HEK293T (cell line): ENCODE measurements at regions of chr5 and their contacts with region 1.

Region 1: DNA sequence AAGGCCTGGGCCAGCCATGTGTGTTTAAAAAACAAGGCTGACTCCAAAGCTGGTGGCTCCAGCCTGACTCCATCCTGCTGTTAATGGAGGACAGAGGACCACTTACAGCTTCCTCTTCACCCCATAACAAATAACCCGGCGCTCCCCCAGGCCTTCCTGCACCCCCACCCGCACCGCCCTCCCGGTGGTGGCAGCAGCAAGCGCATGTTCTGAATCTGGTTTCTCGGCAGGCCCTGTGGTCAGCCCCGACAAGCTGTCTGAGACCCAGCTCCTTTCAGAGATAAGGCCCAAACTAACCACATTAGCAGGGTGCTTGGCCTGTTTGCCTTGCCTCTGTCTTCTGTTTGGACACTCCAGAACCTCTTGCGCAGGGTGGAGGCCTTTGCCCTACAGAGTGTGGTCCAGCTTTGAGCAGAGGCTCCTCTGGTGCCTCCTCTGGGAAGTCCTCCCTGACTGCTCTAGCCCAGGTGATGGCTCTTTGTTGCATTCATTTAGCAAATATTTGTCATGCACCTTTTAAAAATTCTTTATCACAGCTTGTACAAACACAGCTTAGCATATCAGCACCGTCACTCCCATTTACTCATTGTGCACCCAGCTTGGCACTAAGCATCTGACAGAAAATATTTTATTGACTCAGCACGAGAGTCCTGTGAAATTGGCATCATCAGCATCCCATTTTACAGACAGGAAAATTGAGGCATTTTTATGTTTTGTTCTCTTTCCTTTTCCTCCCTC is 78.4 kb downstream of the NDFIP1 start:
- DNase-seq: no peak

Region 2: DNA sequence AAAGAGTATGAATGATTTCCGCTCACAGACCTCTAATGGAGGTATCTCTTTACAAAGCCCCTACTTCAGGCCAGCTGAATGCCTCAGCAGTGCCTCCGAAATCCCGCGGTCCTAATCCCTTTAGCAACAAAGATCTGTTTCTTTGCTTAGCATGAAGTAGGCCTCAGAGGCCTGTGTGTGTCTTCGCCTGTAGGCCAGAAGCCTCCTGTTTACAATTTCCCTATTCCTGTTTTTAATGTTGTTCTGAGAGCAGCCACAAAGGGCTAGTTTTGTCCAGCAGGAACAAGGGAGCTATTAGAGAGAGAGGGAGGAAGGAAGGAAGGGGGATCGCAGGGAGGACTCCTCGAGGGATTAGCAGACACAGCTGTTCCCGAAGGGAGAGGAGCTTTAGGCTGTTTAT is 304.2 kb after region 1 on chr5:
- CTCF ChIA-PET with region 1: interaction called, 10 read pairs
- POLR2A ChIA-PET with region 1: no interaction called
- DNase-seq: no peak